Naive thymus-derived CD4-positive, alpha-beta T cell (primary cell): ENCODE measurements at regions of chr10 and their contacts with region 1.

Region 1: GRCh38 chr10:119892188-119893065 is at the start of gene SEC23IP:
- DNase-seq: peak; percentile 77 to 94 (median 83)
- ATAC-seq: peak; percentile 99
- H3K4me3 ChIP-seq: peak within 1 kb of the TSS; percentile 95
- H3K4me3 Mint-ChIP-seq: peak within 1 kb of the TSS; percentile 92 to 100 (median 98)
- H3K27ac ChIP-seq: peak within 1 kb of the TSS; percentile 89
- H3K27ac Mint-ChIP-seq: peak within 1 kb of the TSS; percentile 95 to 99 (median 98)
- H3K4me1 ChIP-seq: peaks cover 12 to 21% of the 10 kb centered on the region in 2 donors
- H3K4me1 Mint-ChIP-seq: peaks cover 40 to 53% (median 48%) of the 10 kb centered on the region in 7 donors
- H3K27me3 ChIP-seq: no peaks in the 10 kb centered on the region
- H3K27me3 Mint-ChIP-seq: peaks cover 0 to 4% (median 0%) of the 10 kb centered on the region in 5 donors
- total RNA-seq, gene SEC23IP: 34.8 to 68.3 (median 54.4) TPM

Region 2: DNA sequence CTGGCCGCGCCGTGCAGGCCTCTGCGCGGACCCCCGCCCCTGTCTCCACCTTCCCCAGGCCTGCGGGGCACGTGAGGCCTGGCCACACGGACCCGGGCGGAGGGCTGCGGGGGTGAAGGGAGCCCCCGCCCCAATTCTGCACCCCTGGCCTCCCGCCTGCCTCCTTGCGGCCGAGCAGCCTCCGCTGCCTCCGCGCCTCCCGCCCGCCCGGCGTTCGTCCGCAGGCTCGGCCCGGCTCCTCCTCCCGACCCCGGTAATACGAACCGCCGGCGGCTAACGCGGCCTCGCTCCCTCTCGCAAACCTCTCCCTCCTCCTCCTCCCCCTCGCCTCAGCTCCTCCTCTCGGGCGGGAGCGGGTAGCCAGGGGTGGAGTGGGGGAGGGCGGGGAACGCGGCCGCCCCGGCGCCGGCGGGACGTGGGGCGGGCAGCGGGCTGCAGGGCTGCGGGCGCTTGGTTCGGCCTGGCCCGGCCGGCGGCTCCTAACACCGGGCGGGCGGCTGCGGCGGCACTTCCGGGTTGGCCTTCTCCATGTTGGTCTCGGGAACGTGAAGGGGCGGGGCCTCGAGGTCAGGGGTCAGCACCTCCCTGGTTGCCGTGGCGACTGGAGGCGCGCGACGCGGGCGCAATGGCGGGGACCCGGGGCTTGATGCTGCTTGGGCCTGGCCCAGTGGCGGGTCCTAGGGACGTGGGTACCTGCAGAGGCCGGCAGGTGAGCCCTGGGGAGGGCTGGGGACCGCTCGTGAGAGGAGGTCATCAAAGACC is 1845.9 kb before region 1 on chr10 and contains the start of gene RAB11FIP2:
- CTCF ChIA-PET with region 1: no interaction called
- POLR2A ChIA-PET with region 1: no interaction called
- intact Hi-C with region 1: loop called in 1 of 2 experiments (anchors 1 kb)
- DNase-seq: peak; percentile 92 to 98 (median 95)
- ATAC-seq: peak; percentile 97
- H3K4me3 ChIP-seq: peak within 1 kb of the TSS; percentile 81
- H3K4me3 Mint-ChIP-seq: peak within 1 kb of the TSS; percentile 84 to 95 (median 88)
- H3K27ac ChIP-seq: peak within 1 kb of the TSS; percentile 83
- H3K27ac Mint-ChIP-seq: peak within 1 kb of the TSS; percentile 77 to 94 (median 85)
- H3K4me1 ChIP-seq: peaks cover 18 to 19% of the 10 kb centered on the region in 2 donors
- H3K4me1 Mint-ChIP-seq: peaks cover 17 to 54% (median 49%) of the 10 kb centered on the region in 7 donors
- H3K27me3 ChIP-seq: no peaks in the 10 kb centered on the region
- H3K27me3 Mint-ChIP-seq: peaks cover 0 to 20% (median 0%) of the 10 kb centered on the region in 5 donors
- total RNA-seq, gene RAB11FIP2: 17.5 to 32.6 (median 21.6) TPM

Region 3: GRCh38 chr10:119826771-119827170 is 65.7 kb before region 1 on chr10:
- CTCF ChIA-PET with region 1: no interaction called
- POLR2A ChIA-PET with region 1: no interaction called
- intact Hi-C with region 1: no loop called
- DNase-seq: no peak
- ATAC-seq: no peak
- H3K4me3 ChIP-seq: no peak overlapping the region
- H3K4me3 Mint-ChIP-seq: no peak overlapping the region
- H3K27ac ChIP-seq: no peak overlapping the region
- H3K27ac Mint-ChIP-seq: peak overlapping the region in 4 of 9 donors; percentile 25 to 65 (median 52)
- H3K4me1 ChIP-seq: no peaks in the 10 kb centered on the region
- H3K4me1 Mint-ChIP-seq: no peaks in the 10 kb centered on the region
- H3K27me3 ChIP-seq: no peaks in the 10 kb centered on the region
- H3K27me3 Mint-ChIP-seq: no peaks in the 10 kb centered on the region

Region 4: GRCh38 chr10:119872860-119873681 is 19.4 kb before region 1 on chr10:
- CTCF ChIA-PET with region 1: interaction called, 4 read pairs
- POLR2A ChIA-PET with region 1: interaction called, 61 read pairs
- intact Hi-C with region 1: loop called (anchors 1 kb)
- DNase-seq: peak; percentile 81 to 88 (median 86)
- ATAC-seq: peak; percentile 96
- H3K4me3 ChIP-seq: peak overlapping the region; percentile 97
- H3K4me3 Mint-ChIP-seq: peak overlapping the region; percentile 82 to 92 (median 89)
- H3K27ac ChIP-seq: peak overlapping the region; percentile 84
- H3K27ac Mint-ChIP-seq: peak overlapping the region; percentile 79 to 95 (median 92)
- H3K4me1 ChIP-seq: peaks cover 21 to 28% of the 10 kb centered on the region in 2 donors
- H3K4me1 Mint-ChIP-seq: peaks cover 23 to 46% (median 41%) of the 10 kb centered on the region in 7 donors
- H3K27me3 ChIP-seq: no peaks in the 10 kb centered on the region
- H3K27me3 Mint-ChIP-seq: peaks cover 0 to 6% (median 0%) of the 10 kb centered on the region in 5 donors

Region 5: GRCh38 chr10:119910689-119911088 is 18.3 kb after region 1 on chr10:
- CTCF ChIA-PET with region 1: no interaction called
- POLR2A ChIA-PET with region 1: no interaction called
- intact Hi-C with region 1: no loop called
- DNase-seq: no peak
- ATAC-seq: no peak
- H3K4me3 ChIP-seq: no peak overlapping the region
- H3K4me3 Mint-ChIP-seq: no peak overlapping the region
- H3K27ac ChIP-seq: no peak overlapping the region
- H3K27ac Mint-ChIP-seq: no peak overlapping the region
- H3K4me1 ChIP-seq: no peaks in the 10 kb centered on the region
- H3K4me1 Mint-ChIP-seq: peaks cover 0 to 4% (median 0%) of the 10 kb centered on the region in 7 donors
- H3K27me3 ChIP-seq: no peaks in the 10 kb centered on the region
- H3K27me3 Mint-ChIP-seq: no peaks in the 10 kb centered on the region